ENCODE measurements at regions of chr1 and their contacts with region 1.

Region 1: DNA sequence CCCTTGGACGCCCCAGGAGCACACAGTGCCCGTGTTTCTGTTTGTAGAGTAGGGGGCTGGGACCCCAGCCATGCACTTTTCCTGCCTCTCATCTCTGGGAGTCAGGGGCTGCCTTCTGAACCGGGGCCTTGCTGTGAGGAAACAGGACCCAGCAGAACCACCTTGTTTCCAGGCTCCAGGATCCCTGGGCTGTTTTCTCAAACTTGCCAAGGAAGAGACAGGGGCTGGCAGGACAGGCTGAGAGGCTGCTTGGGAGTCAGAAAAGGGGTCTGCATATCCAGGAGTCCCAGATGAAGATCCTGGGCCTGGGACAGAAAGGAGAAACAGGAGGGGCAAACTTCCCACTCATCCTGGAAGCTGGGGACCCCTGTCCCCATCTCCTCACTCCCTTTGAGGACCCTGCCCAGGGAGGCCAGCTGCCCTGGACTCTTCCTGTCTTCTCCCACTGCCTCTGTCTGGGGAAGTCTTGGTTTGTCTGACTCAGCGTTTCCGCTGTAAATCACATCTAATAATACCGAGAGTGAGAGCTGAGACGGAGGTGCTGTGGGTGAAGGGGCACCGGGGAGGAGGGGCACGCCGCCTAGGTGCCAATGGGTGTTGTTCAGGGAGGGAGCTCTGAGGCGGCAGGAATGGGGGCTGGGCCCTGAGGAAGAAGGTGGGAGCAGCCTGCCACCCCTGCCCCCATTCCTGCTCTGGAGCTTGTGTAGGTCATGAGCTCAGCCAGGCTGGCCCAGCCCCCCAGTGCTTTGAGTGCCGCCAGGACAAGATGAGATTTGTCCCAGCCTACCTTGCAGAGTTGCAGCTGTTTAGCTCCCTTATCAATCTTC is 16.7 kb downstream of the POU3F1 start:
- DNase-seq: peak in 4 of 5 donors; percentile 55 to 82 (median 78)
- H3K4me3 ChIP-seq: no peak overlapping the region
- H3K27ac ChIP-seq: peak overlapping the region in 1 of 2 donors; percentile 11
- H3K4me1 ChIP-seq: peaks cover 0 to 24% (median 5%) of the 10 kb centered on the region in 3 donors
- H3K27me3 ChIP-seq: no peaks in the 10 kb centered on the region
- CTCF ChIP-seq: no peak

Region 2: GRCh38 chr1:37919277-37919676 is 110.6 kb before region 1 on chr1:
- intact Hi-C with region 1: no loop called
- DNase-seq: no peak
- H3K4me3 ChIP-seq: no peak overlapping the region
- H3K27ac ChIP-seq: no peak overlapping the region
- H3K4me1 ChIP-seq: peaks cover 0 to 3% (median 0%) of the 10 kb centered on the region in 3 donors
- H3K27me3 ChIP-seq: no peaks in the 10 kb centered on the region
- CTCF ChIP-seq: peak; percentile 29

Region 3: DNA sequence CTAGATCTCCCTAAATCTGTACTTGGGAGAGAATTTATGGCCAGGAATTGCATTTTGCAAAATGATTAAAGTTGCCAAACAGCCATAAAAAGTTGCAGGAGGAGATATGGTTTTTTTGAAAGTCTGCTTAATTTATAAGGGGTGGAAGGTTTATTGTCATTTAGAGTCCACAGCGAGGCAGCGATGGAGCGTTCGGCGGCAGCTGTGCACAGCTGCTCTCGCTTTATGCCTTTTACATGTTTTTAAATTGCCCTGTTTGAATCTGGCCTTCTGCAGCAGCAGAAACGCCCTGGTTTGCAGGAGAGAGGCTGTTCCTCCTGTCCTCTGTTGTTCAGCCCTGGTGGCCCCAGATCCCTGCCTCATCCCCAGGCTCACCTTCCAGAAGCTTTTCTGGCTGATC is 161.6 kb after region 1 on chr1:
- intact Hi-C with region 1: no loop called
- DNase-seq: peak; percentile 63 to 91 (median 83)
- H3K4me3 ChIP-seq: no peak overlapping the region
- H3K27ac ChIP-seq: no peak overlapping the region
- H3K4me1 ChIP-seq: peaks cover 0 to 5% (median 0%) of the 10 kb centered on the region in 3 donors
- H3K27me3 ChIP-seq: no peaks in the 10 kb centered on the region
- CTCF ChIP-seq: no peak

Region 4: DNA sequence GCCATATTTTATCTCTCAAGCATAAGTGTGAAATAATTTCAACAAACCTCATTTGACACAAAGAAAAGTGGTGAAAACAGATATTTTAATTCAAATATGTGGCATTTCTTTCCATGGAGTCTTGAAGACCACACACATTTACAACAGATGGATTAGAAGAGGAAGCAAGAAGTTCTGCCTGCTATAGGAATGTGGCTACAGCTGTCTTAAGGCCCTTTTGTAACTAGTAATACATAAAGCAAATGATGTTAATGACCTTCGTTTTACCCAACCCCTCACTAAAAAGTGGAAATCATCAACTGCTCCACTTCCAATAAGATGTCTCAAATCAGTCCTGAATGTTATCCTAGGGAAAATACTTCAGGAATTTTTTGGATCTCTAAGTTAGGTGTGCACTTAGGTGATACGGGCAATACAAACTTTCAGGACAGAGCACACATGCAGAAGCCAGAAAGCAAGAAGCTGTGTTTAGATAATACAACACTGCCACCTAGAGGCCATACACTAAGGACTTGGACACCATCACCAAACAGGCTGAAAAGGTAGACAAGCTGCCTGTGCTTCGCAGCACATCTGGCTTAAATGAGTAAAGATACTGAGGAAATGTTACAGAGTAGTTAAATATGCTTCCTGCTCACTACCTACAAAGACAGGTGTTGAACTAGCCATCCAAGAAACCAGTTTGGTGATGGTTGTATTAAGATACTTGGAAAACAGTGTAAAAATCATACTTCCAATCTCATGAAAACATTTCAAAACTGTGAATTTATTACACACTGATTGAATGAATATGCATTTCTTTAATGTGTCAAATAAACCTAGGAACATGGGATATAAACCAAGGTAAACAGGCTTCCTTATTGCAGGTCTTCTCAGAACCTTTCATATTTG is 805.3 kb after region 1 on chr1:
- intact Hi-C with region 1: loop called (anchors 10 kb)
- DNase-seq: peak in 4 of 5 donors; percentile 48 to 94 (median 78)
- H3K4me3 ChIP-seq: no peak overlapping the region
- H3K27ac ChIP-seq: no peak overlapping the region
- H3K4me1 ChIP-seq: no peaks in the 10 kb centered on the region
- H3K27me3 ChIP-seq: no peaks in the 10 kb centered on the region
- CTCF ChIP-seq: peak; percentile 84